GM13976 (cell line): ENCODE measurements at regions of chr1 and their contacts with region 1.

Region 1: DNA sequence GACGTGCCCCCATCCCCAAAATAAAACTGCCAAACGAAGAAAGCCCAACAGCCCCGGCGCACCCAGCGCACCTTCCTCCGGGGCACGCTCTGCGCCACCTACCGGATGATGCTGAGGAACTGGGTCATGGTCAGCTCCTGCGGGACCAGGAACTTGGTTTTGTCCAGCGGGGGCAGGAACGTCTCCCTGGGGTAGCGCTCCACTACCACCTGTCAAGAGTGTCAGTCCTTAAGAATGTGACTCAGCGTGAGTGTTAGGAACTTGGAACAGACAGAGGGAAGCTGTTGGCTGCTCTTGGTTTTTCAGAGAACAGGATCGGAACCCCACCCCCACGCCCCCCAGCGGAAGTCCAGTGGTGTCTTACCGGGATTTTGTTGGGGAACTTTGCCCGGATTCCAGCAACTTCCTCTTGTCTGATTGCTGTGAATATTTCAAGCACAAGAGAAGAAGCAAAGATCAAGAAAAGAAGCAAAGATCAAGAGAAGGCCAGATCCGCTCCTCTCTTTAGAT is 431 bp downstream of the MAP1LC3C start:
- DNase-seq: peak; percentile 65
- CTCF ChIP-seq: peak; percentile 56

Region 2: DNA sequence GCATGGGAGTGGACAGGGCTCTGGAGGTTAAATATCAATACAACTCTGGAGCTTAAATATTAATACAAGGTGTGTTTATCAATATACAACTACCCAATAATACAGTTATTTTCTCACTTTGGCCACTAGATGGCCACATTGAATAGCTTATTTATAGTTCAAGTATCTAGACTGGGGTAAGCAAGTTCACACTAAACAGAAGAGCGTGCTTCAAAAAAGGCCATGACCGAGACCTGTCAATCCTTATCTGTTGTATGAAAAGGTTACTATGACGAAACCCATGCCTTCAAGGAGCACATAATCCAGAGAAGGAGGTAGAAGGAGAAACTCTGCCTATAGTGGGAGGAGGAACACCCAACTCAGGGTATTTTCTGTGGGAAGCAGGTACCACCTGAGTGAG is 387.4 kb before region 1 on chr1:
- in situ Hi-C with region 1: loop called (anchors 10 kb)
- DNase-seq: peak; percentile 36
- CTCF ChIP-seq: peak; percentile 25